AG04450 (cell line): ENCODE measurements at regions of chr4 and their contacts with region 1.

Region 1: GRCh38 chr4:89482248-89482647 is 174.6 kb upstream of the GPRIN3 start:
- DNase-seq: no peak
- H3K4me3 ChIP-seq: no peak overlapping the region
- H3K27ac ChIP-seq: no peak overlapping the region
- H3K27me3 ChIP-seq: no peaks in the 10 kb centered on the region
- CTCF ChIP-seq: peak; percentile 36

Region 2: GRCh38 chr4:89226665-89227574 is 255.3 kb before region 1 on chr4:
- CTCF ChIA-PET with region 1: interaction called, 11 read pairs
- POLR2A ChIA-PET with region 1: no interaction called
- DNase-seq: peak; percentile 29
- H3K4me3 ChIP-seq: no peak overlapping the region
- H3K27ac ChIP-seq: no peak overlapping the region
- H3K27me3 ChIP-seq: no peaks in the 10 kb centered on the region
- CTCF ChIP-seq: peak; percentile 76

Region 3: DNA sequence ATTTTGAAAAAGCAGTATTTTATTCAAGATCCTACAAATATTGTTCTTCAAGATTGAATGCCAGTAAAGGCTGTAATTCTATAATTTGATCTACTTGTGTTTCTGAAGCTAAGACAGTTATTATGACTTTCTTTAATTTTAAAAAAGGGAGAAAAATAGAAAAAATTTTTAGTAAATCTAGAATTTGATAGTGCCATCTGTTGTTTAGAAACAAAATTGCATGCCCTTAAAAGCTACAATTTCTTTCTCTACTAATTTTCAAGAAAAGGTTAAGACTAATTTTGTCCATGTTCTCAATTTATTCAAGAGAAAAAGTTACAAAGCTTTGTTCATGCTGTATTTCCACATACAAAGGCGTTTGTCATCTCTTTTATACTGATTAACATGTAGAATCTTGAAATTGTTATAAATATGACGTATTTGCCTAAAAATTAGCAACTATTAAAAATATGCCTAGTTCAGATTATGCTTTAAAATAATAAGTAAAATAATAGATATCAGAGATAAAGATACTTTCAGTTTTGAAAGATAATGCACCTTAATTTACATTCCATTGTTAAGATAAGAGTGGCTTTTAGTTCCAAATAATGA is 386.8 kb after region 1 on chr4:
- CTCF ChIA-PET with region 1: interaction called, 72 read pairs
- POLR2A ChIA-PET with region 1: no interaction called
- DNase-seq: no peak
- H3K4me3 ChIP-seq: no peak overlapping the region
- H3K27ac ChIP-seq: no peak overlapping the region
- H3K27me3 ChIP-seq: no peaks in the 10 kb centered on the region
- CTCF ChIP-seq: peak; percentile 55

Region 4: DNA sequence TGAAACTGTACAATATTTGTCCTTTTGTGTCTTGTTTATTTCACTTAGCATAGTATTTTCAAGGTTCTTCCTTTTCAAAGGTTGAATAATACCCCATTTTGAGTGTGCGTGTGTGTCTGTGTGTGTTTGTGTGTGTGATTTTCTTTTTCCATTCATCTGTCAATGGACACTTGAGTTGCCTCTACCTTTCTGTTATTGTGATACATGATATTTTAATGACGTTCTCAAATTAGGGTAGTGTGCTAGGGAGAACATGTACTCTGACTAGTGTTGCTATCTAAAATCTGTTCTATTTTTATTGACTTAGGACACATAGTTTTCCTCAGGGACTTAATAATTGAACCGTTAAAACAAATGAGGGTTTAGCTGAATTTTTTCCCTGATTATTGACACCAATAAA is 422.3 kb after region 1 on chr4:
- CTCF ChIA-PET with region 1: interaction called, 19 read pairs
- POLR2A ChIA-PET with region 1: no interaction called
- DNase-seq: no peak
- H3K4me3 ChIP-seq: no peak overlapping the region
- H3K27ac ChIP-seq: no peak overlapping the region
- H3K27me3 ChIP-seq: no peaks in the 10 kb centered on the region
- CTCF ChIP-seq: no peak